ENCODE measurements at regions of chr15 and their contacts with region 1.

Region 1: GRCh38 chr15:99264125-99264524 is 12.8 kb downstream of the LRRC28 start:
- DNase-seq: no peak
- ATAC-seq: no peak
- H3K4me3 ChIP-seq: no peak overlapping the region
- H3K27ac ChIP-seq: no peak overlapping the region
- H3K4me1 ChIP-seq: no peaks in the 10 kb centered on the region
- H3K27me3 ChIP-seq: no peaks in the 10 kb centered on the region
- CTCF ChIP-seq: no peak
- EP300 ChIP-seq: no peak
- POLR2A ChIP-seq: no peak
- RAD21 ChIP-seq: no peak

Region 2: GRCh38 chr15:99224372-99225214 is 39.5 kb before region 1 on chr15:
- CTCF ChIA-PET with region 1: no interaction called
- POLR2A ChIA-PET with region 1: no interaction called
- RAD21 ChIA-PET with region 1: no interaction called
- SMC1A ChIA-PET with region 1: no interaction called
- in situ Hi-C with region 1: no loop called
- intact Hi-C with region 1: no loop called
- DNase-seq: no peak
- ATAC-seq: no peak
- H3K4me3 ChIP-seq: no peak overlapping the region
- H3K27ac ChIP-seq: no peak overlapping the region
- H3K4me1 ChIP-seq: no peaks in the 10 kb centered on the region
- H3K27me3 ChIP-seq: no peaks in the 10 kb centered on the region
- CTCF ChIP-seq: no peak
- EP300 ChIP-seq: no peak
- POLR2A ChIP-seq: no peak
- RAD21 ChIP-seq: no peak

Region 3: GRCh38 chr15:99250494-99251435 is 13.4 kb before region 1 on chr15:
- CTCF ChIA-PET with region 1: interaction called, 7 read pairs
- POLR2A ChIA-PET with region 1: interaction called, 6 read pairs
- RAD21 ChIA-PET with region 1: interaction called, 6 read pairs
- SMC1A ChIA-PET with region 1: interaction called, 11 read pairs
- in situ Hi-C with region 1: no loop called
- intact Hi-C with region 1: no loop called
- DNase-seq: peak; percentile 99
- ATAC-seq: peak; percentile 91
- H3K4me3 ChIP-seq: peak overlapping the region; percentile 75
- H3K27ac ChIP-seq: peak overlapping the region; percentile 84
- H3K4me1 ChIP-seq: peaks cover 11% of the 10 kb centered on the region
- H3K27me3 ChIP-seq: no peaks in the 10 kb centered on the region
- CTCF ChIP-seq: no peak
- EP300 ChIP-seq: no peak
- POLR2A ChIP-seq: peak; percentile 88
- RAD21 ChIP-seq: no peak

Region 4: GRCh38 chr15:99755692-99756409 is 491.7 kb after region 1 on chr15:
- CTCF ChIA-PET with region 1: interaction called, 16 read pairs
- POLR2A ChIA-PET with region 1: no interaction called
- RAD21 ChIA-PET with region 1: no interaction called
- SMC1A ChIA-PET with region 1: interaction called, 11 read pairs
- in situ Hi-C with region 1: no loop called
- intact Hi-C with region 1: no loop called
- DNase-seq: peak; percentile 43
- ATAC-seq: peak; percentile 99
- H3K4me3 ChIP-seq: no peak overlapping the region
- H3K27ac ChIP-seq: no peak overlapping the region
- H3K4me1 ChIP-seq: peaks cover 5% of the 10 kb centered on the region
- H3K27me3 ChIP-seq: no peaks in the 10 kb centered on the region
- CTCF ChIP-seq: peak; percentile 80 to 91 (median 88)
- EP300 ChIP-seq: no peak
- POLR2A ChIP-seq: no peak
- RAD21 ChIP-seq: peak; percentile 96

Region 5: GRCh38 chr15:99909592-99910295 is 645.6 kb after region 1 on chr15:
- CTCF ChIA-PET with region 1: no interaction called
- POLR2A ChIA-PET with region 1: no interaction called
- RAD21 ChIA-PET with region 1: no interaction called
- SMC1A ChIA-PET with region 1: no interaction called
- in situ Hi-C with region 1: loop called (anchors 10 kb)
- intact Hi-C with region 1: no loop called
- DNase-seq: no peak
- ATAC-seq: peak; percentile 75
- H3K4me3 ChIP-seq: no peak overlapping the region
- H3K27ac ChIP-seq: no peak overlapping the region
- H3K4me1 ChIP-seq: no peaks in the 10 kb centered on the region
- H3K27me3 ChIP-seq: no peaks in the 10 kb centered on the region
- CTCF ChIP-seq: peak; percentile 35 to 46 (median 37); a peak in 4 of 6 replicates
- EP300 ChIP-seq: no peak
- POLR2A ChIP-seq: no peak
- RAD21 ChIP-seq: peak; percentile 64